GM13977 (cell line): ENCODE measurements at regions of chr2 and their contacts with region 1.

Region 1: DNA sequence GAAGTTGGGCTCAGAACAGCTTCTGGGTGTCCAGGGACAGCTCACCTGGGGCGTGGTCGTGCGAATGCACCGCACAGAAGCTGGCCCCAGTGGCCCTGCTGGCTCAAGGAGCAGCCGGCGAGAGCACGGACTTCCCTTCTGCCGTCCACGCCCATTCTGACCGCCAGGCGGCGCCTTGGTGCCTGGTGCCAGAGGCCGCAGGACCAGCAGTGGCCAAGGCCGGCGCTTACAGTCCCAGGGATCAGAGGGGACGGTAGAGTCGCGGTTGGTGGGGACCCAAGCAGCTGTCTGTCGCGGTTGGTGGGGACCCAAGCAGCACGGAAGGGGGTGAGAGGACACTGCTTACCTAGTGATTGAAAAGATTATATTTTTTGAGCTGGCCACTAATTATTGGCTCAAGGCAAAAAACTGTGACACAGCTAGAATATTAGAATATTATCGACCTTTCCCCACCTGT is 25.7 kb downstream of the NPPC start:
- DNase-seq: peak; percentile 73
- CTCF ChIP-seq: peak; percentile 92

Region 2: DNA sequence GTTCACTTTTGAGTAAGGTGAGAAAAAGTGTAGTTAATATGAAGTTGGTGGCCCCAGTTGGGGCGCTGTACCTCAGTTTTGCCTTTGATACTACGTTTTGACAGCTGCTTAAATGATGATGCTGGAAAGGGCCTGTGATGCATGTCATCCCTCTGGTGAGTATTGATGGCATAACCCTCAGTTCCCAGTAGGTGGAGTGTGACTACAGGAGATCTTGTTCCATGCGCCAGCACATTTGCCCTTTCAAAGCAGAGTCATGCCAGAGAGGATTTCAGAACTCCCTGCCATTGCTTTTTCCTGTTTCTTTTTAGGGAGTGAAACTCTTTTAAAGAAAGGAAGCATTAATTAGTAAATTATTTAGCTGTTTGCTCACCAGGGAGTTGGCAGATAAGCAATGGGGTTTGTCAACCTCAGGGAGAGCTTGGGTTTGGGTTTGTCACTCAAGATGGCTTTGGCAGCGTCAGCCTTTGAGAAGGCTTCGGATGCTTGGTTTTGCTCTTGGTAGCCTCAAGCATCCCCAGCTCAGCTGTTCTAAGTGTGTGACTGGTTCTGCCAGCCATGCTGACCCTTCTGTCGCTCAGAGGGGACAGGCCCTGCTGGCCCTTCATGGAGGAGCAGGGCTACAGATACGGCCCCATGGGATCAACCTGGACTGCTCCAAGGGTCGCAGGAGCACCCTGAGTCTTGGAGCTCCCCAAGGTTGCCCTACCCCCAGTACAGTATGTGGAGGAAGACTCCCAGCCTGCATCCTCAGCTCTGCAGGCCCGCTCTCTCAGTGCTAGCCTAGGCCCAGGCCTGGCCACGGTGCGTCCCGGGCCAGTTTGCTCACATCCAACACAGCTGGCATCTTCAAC is 673.0 kb before region 1 on chr2:
- in situ Hi-C with region 1: no loop called
- DNase-seq: peak; percentile 79
- CTCF ChIP-seq: peak; percentile 73

Region 3: GRCh38 chr2:231530091-231531011 is 370.2 kb before region 1 on chr2 and contains the start of gene NMUR1:
- in situ Hi-C with region 1: no loop called
- DNase-seq: peak; percentile 88
- CTCF ChIP-seq: peak; percentile 92

Region 4: DNA sequence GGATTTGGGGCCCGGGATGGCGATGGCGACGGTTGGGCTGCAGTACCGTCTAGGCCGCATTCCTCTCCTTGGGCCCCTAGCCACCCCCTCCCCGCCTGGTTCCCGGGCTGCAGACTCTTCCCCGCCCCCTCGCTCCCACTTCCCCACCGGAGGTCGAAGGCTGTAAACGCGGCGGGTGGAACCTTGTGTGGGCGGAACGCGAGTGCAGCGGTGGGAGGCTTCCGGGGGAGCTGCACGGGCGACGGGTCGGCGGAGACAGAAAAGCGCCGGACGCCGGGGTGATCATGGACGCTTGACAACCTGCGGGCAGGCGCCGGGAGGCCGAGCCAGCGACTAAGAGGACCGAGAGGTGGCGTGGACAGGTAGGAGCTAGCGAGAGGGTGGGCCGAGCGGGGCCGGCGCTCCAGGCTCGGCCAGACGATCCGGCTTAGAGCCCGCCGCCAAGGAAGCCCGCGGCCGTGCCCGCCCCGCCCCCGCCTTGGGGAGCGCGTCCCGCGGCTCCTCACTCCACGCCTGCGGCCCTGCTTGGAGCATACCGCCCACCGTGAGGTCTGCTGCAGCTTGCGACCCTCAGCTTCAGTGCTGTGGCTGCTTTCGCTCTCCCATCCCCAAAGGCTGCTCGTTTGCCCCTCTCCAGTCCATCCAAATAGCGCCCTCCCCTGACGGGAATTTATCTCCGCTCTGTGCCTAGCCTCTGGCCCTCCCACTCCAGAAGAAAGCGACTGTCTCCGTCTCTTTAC is 114.2 kb before region 1 on chr2 and contains the start of gene COPS7B:
- in situ Hi-C with region 1: no loop called
- DNase-seq: peak; percentile 86
- CTCF ChIP-seq: peak; percentile 61

Region 5: DNA sequence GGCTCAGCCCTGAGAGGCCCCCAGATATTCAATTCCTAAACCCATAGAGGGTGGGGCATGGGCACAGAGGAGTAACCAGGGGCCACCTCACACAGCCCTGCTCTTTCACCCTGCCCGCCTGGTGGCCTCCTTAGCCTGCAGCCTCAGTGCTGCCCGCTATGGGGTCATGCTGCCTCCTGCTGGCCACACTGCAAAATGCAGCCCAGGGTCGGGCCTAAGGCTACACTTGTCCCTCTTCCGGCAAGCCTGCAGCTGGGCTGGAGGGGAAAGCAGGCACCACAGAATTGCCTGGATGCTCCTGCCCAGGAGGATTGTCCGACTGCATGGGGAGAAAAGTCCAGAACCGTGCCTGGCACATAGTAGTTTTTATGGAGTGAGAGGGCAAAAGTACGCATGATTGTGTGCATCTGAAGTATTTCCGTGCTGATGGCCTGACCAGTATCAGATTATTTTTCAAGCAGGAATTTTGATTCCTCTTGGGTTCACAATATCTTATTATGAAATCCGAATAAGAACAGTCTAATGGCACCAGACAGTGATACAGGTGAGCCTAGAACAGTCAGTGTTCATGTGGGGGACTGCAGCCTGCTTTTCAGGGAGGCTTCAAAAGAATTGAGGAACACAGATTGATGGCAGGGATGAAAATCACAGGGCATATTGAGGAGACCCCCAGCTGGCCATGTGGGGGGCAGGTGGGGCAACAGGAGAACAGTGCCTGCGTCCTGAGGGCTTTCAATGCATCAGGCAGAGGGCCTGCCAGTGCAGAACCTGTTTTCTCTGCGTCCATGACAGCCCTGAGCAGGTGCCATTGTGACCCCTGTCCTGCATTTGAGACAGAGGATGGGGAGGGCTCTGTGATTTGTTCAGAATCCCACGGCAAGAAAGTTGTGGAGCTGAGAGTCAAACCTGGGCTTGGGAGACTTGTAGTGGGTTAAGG is 426.9 kb after region 1 on chr2:
- in situ Hi-C with region 1: loop called (anchors 10 kb)
- DNase-seq: peak; percentile 84
- CTCF ChIP-seq: peak; percentile 95

Region 6: DNA sequence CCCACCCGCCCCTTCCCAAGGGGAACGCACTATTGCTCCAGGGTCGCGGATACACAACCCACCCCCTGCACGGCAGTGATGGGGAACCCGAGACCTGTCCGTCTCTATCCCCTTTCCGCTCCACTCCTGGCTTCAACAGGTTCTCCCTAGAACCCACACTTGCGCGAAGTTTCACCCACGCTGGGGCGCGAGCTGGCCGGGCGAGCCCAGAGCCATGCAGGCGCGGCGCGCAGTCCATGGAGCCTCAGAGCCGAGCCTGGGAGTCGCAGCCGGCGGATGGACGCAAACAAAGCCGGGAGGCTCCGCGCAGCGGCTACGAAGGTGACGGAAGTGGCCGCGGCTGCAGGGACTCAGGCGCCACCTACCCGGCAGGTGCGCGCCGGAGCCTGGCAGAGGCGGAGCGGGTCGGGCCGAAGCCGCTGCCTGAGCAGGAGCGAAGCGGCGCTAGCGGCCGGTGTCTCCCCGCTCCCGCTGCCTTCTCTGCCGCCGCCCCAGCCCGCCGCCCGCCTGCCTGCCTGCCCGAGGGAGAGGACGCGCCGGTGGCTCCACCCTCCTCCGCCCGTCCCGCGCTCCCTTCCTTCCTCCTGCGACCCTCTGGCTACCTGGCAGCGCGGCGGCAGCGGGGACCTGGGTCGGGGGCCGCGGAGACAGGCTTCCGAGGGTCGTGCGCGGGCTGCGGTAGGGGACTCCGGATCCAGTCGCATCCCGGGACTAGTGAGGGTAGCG is 520.1 kb after region 1 on chr2:
- in situ Hi-C with region 1: loop called (anchors 10 kb)
- DNase-seq: peak; percentile 64
- CTCF ChIP-seq: no peak

Region 7: GRCh38 chr2:233764264-233764663 is 1863.8 kb after region 1 on chr2:
- in situ Hi-C with region 1: no loop called
- DNase-seq: no peak
- CTCF ChIP-seq: no peak